ENCODE measurements at regions of chr1 and their contacts with region 1.

Region 1: DNA sequence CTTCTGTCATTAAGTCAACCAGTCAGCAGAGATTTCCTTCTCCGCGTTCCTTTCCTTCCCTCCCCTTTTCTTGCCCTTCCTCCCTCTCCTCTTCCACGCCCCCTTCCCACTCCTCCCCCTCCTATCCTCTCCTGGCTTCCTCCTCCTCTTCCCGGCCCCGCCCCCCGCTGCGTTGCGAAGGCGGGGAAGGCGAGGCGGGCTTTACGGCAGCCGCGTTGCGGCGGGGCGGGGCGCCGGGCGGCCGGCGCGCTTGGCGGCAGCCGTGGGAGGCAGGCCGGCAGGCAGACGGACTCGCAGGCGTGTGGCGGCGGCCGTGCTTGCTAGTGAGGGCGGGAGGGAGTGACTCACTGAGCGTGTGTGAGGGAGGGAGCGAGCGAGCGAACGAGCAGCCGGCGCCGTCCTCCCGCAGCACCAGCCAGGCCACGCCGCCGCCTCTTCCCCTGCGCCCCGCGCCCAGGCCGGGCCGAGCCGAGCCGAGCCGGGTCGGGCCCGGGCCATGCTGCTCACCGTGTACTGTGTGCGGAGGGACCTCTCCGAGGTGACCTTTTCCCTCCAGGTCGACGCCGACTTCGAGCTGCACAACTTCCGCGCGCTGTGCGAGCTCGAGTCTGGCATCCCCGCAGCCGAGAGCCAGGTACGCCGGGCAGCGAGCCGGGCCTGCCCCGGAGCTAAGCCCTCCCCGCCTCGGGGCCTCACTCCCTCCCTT is at the start of gene DDI2:
- DNase-seq: peak; percentile 83 to 96 (median 92)
- ATAC-seq: peak; percentile 88
- H3K4me3 ChIP-seq: peak within 1 kb of the TSS; percentile 83 to 89
- H3K4me3 Mint-ChIP-seq: peak within 1 kb of the TSS; percentile 94
- H3K27ac ChIP-seq: peak within 1 kb of the TSS; percentile 73 to 91
- H3K27ac Mint-ChIP-seq: peak within 1 kb of the TSS; percentile 94
- H3K4me1 ChIP-seq: peaks cover 44% of the 10 kb centered on the region
- H3K4me1 Mint-ChIP-seq: peaks cover 46% of the 10 kb centered on the region
- H3K27me3 ChIP-seq: no peaks in the 10 kb centered on the region
- H3K27me3 Mint-ChIP-seq: no peaks in the 10 kb centered on the region
- CTCF ChIP-seq: no peak
- total RNA-seq, gene DDI2: 34.7 to 37.7 TPM

Region 2: DNA sequence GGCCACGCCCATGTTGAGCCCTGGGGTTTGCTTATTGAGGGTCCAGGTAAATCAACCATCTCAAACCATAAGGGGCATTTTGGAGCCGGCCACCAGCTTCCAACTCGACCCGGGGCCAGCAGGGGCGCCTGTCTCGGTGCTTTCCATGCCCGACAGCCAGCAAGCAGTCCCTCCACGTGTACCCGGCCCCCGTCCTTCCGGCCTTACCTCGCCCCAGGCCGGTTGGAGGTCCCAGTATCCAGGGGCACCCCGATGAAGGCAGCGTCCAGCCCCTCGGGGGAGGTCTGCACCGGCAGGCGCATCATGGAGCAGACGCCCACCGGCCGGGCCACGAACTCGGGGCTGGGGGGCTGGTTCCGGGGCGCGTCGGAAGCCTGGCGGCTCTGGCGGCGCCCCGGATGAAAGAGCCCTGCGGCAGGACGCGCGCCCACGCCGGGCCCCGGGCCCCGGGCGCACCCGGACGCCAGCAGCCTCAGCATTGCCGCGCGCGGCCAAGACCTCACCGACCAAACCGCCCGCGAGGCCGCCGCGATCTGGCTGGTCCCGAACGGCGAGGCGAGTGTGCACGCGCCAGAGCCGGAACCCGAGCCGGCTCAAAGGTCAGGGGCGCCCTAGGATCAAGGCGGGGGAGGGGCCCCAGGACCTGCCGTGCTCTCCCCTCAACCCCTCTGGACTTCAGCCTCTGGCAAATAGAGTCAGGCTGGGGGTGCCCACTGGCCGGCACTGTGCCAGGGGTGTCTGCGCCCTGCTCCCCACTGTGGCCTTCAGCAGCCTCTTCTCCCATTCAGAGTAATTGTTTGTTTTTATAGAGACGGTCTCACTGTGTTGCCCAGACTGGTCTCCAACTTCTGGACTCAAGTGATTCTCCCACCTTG is 32.6 kb before region 1 on chr1 and contains the start of gene AGMAT:
- CTCF ChIA-PET with region 1: interaction called, 3 read pairs
- POLR2A ChIA-PET with region 1: interaction called, 4 read pairs
- intact Hi-C with region 1: loop called in 1 of 2 experiments (anchors 1 kb)
- DNase-seq: peak in 8 of 9 experiments; percentile 31 to 78 (median 47)
- ATAC-seq: peak; percentile 81
- H3K4me3 ChIP-seq: peak within 1 kb of the TSS; percentile 74 to 83
- H3K4me3 Mint-ChIP-seq: peak within 1 kb of the TSS; percentile 82
- H3K27ac ChIP-seq: peak within 1 kb of the TSS; percentile 59
- H3K27ac Mint-ChIP-seq: peak within 1 kb of the TSS; percentile 92
- H3K4me1 ChIP-seq: peaks cover 32% of the 10 kb centered on the region
- H3K4me1 Mint-ChIP-seq: peaks cover 31% of the 10 kb centered on the region
- H3K27me3 ChIP-seq: no peaks in the 10 kb centered on the region
- H3K27me3 Mint-ChIP-seq: no peaks in the 10 kb centered on the region
- CTCF ChIP-seq: no peak
- total RNA-seq, gene AGMAT: 2.3 to 2.4 TPM

Region 3: DNA sequence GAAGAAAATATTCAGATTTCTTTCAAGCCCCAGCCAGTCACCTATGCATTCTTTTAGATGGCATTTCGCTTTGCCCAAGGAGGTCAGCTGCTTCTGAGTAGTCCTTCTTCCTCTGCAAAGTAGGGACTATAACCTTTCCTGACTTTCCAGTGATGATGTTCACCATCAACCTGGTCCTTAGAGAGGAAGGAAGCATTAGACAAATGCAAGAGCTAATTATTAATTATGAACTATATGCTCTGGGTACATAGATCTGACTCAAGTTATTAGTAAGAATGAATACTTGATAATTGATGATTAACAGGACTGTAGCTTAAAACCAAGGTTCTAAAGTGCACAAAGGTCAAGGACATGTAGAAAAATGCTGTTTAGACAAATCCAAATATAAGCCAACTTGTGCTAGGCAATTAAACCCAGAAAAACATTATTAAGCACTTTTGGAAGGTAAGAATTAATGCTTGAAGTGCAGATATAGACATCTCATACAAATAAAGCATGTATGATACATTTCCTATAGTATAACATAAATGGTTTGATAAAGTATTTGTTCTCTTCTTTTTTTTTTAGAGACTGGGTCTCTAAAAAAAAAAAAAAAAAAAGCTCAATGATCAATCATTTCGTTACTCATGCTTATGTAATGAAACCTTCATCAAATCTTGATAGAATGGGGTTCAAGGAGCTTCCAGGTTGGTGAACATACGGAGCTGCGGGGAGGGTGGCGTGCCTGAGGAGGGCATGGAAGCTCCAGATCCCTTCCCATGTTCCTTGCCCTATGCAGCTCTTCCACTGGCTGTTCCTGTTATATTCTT is 21.3 kb before region 1 on chr1:
- CTCF ChIA-PET with region 1: interaction called, 3 read pairs
- POLR2A ChIA-PET with region 1: no interaction called
- intact Hi-C with region 1: loop called in 1 of 2 experiments (anchors 1 kb)
- DNase-seq: no peak
- ATAC-seq: no peak
- H3K4me3 ChIP-seq: no peak overlapping the region
- H3K4me3 Mint-ChIP-seq: no peak overlapping the region
- H3K27ac ChIP-seq: no peak overlapping the region
- H3K27ac Mint-ChIP-seq: no peak overlapping the region
- H3K4me1 ChIP-seq: no peaks in the 10 kb centered on the region
- H3K4me1 Mint-ChIP-seq: no peaks in the 10 kb centered on the region
- H3K27me3 ChIP-seq: no peaks in the 10 kb centered on the region
- H3K27me3 Mint-ChIP-seq: no peaks in the 10 kb centered on the region
- CTCF ChIP-seq: no peak

Region 4: DNA sequence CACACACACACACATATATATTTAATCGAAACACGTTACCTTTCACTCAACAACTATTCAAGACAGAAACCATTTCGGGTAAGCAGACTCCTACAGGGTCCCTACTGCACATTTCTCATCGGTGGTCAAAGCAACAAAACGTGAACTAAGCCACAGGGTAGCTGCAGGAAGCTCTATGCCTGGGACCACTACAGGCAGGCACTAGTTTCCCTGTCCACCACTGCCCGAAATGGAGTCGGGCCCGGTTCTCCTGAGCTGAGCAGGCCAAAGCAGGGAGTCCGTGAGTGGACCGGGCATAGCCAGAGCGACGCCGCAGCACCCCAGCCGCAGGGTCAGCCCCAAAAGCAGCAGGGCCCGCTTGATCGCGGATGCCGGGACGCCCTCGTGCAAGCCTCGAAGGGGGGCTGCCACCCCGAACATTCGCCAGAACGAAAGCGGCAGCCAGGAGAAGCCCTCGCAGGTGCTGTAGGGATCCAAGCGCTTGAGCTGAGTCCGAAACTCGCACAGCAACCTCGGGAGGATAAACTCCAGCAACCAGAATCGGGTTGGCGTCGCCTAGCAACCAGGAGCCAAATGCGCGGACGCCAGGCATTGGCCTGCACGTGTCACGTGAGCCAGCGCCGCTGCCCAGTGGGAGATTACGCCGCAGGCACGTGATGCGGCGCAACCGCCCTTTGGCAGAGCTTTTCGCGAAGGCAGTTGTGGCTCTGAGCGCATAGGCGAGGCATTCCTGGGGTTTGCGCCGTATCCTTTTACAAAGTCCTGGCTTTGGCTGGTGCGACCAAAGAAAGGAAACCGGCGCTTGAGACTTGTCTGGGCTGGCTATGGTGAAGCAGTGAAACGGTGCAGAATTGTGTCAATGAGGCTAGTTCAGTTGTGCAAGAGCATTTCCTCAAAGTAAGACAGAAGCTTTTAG is 14.0 kb before region 1 on chr1:
- CTCF ChIA-PET with region 1: no interaction called
- POLR2A ChIA-PET with region 1: interaction called, 11 read pairs
- intact Hi-C with region 1: loop called (anchors 1 kb)
- DNase-seq: peak; percentile 82 to 97 (median 92)
- ATAC-seq: peak; percentile 94
- H3K4me3 ChIP-seq: peak overlapping the region; percentile 77 to 79
- H3K4me3 Mint-ChIP-seq: peak overlapping the region; percentile 69
- H3K27ac ChIP-seq: peak overlapping the region; percentile 57 to 77
- H3K27ac Mint-ChIP-seq: peak overlapping the region; percentile 75
- H3K4me1 ChIP-seq: peaks cover 5% of the 10 kb centered on the region
- H3K4me1 Mint-ChIP-seq: peaks cover 12% of the 10 kb centered on the region
- H3K27me3 ChIP-seq: no peaks in the 10 kb centered on the region
- H3K27me3 Mint-ChIP-seq: no peaks in the 10 kb centered on the region
- CTCF ChIP-seq: no peak

Region 5: DNA sequence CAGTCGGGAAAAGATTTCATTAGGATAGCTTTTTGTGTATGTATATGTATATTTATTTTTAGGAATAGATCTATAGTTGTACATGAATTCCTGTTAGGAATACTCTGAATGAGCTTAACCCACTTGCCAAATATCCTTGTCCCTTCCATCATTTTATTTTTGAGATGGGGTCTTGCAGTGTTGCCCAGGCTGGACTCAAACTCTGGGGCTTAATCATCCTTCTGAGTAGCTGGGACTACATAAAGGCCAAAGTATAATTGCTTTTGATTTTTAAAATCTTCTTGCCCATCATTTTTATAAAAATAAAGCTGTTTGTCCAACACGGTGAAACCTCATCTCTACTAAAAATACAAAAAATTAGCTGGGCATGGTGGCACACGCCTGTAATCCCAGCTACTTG is 46.6 kb after region 1 on chr1:
- CTCF ChIA-PET with region 1: no interaction called
- POLR2A ChIA-PET with region 1: no interaction called
- intact Hi-C with region 1: no loop called
- DNase-seq: no peak
- ATAC-seq: no peak
- H3K4me3 ChIP-seq: no peak overlapping the region
- H3K4me3 Mint-ChIP-seq: no peak overlapping the region
- H3K27ac ChIP-seq: no peak overlapping the region
- H3K27ac Mint-ChIP-seq: no peak overlapping the region
- H3K4me1 ChIP-seq: no peaks in the 10 kb centered on the region
- H3K4me1 Mint-ChIP-seq: no peaks in the 10 kb centered on the region
- H3K27me3 ChIP-seq: no peaks in the 10 kb centered on the region
- H3K27me3 Mint-ChIP-seq: no peaks in the 10 kb centered on the region
- CTCF ChIP-seq: no peak

Region 6: GRCh38 chr1:15684468-15685291 is 67.4 kb after region 1 on chr1:
- CTCF ChIA-PET with region 1: no interaction called
- POLR2A ChIA-PET with region 1: no interaction called
- intact Hi-C with region 1: loop called (anchors 5 to 10 kb)
- DNase-seq: peak in 8 of 9 experiments; percentile 5 to 68 (median 40)
- ATAC-seq: peak; percentile 50
- H3K4me3 ChIP-seq: peak overlapping the region; percentile 74 to 81
- H3K4me3 Mint-ChIP-seq: peak overlapping the region; percentile 90
- H3K27ac ChIP-seq: peak overlapping the region; percentile 67 to 79
- H3K27ac Mint-ChIP-seq: peak overlapping the region; percentile 96
- H3K4me1 ChIP-seq: peaks cover 16% of the 10 kb centered on the region
- H3K4me1 Mint-ChIP-seq: peaks cover 31% of the 10 kb centered on the region
- H3K27me3 ChIP-seq: no peaks in the 10 kb centered on the region
- H3K27me3 Mint-ChIP-seq: no peaks in the 10 kb centered on the region
- CTCF ChIP-seq: no peak

Region 7: GRCh38 chr1:15975805-15976680 is 358.7 kb after region 1 on chr1 and contains the start of gene ZBTB17:
- CTCF ChIA-PET with region 1: no interaction called
- POLR2A ChIA-PET with region 1: no interaction called
- intact Hi-C with region 1: loop called in 1 of 2 experiments (anchors 10 kb)
- DNase-seq: peak; percentile 90 to 98 (median 95)
- ATAC-seq: peak; percentile 88
- H3K4me3 ChIP-seq: peak within 1 kb of the TSS; percentile 89 to 93
- H3K4me3 Mint-ChIP-seq: peak within 1 kb of the TSS; percentile 90
- H3K27ac ChIP-seq: peak within 1 kb of the TSS; percentile 68 to 87
- H3K27ac Mint-ChIP-seq: peak within 1 kb of the TSS; percentile 94
- H3K4me1 ChIP-seq: peaks cover 11% of the 10 kb centered on the region
- H3K4me1 Mint-ChIP-seq: peaks cover 38% of the 10 kb centered on the region
- H3K27me3 ChIP-seq: no peaks in the 10 kb centered on the region
- H3K27me3 Mint-ChIP-seq: no peaks in the 10 kb centered on the region
- CTCF ChIP-seq: no peak
- total RNA-seq, gene ZBTB17: 106 to 115 TPM

Region 8: DNA sequence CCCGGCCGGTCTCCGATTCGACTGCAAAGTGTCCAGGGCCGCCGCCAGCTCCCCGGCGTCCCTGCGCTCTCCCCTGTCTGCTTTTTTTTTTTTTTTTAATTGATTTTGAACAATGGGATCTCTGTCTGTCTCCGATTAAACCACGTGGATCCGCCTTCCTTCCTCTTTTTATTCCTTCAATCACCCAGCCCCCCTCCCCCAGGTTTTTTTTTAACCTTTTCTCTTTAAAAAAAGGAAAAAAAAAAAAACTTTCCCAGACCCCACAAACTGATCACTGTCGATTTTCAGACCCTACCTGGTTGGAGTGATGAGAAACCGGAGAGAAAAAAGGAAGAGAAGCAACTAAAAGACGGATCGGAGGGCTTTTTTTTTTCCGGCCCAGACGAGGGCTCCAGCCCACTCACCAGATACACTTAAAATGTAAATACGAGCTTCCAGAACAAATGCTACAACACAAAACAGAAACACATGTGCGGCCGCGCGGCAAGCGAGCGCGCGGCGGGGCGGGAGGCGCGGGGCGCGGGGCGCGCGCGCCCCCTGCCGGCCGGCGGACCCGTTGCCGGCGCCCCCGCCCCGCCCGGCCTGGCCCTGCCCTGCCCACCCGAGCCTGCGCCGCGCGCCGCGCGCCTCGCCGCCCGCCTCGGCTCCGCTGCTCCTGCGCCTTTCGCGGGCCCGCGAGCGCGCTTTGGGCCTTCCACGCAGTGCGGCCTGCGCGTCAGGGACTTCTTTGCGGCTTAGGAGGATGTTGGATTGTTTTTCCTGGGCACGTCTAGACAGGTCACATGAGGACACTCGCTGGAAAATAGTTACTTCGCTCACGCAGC is 1822.1 kb after region 1 on chr1 and contains the start of gene RCC2:
- CTCF ChIA-PET with region 1: no interaction called
- POLR2A ChIA-PET with region 1: no interaction called
- intact Hi-C with region 1: loop called in 1 of 2 experiments (anchors 10 kb)
- DNase-seq: peak; percentile 51 to 89 (median 72)
- ATAC-seq: peak; percentile 74
- H3K4me3 ChIP-seq: peak within 1 kb of the TSS; percentile 90 to 98
- H3K4me3 Mint-ChIP-seq: peak within 1 kb of the TSS; percentile 97
- H3K27ac ChIP-seq: peak within 1 kb of the TSS; percentile 80 to 82
- H3K27ac Mint-ChIP-seq: peak within 1 kb of the TSS; percentile 97
- H3K4me1 ChIP-seq: peaks cover 32% of the 10 kb centered on the region
- H3K4me1 Mint-ChIP-seq: peaks cover 34% of the 10 kb centered on the region
- H3K27me3 ChIP-seq: no peaks in the 10 kb centered on the region
- H3K27me3 Mint-ChIP-seq: no peaks in the 10 kb centered on the region
- CTCF ChIP-seq: no peak
- total RNA-seq, gene RCC2: 25.4 to 28.0 TPM